ENCODE measurements at regions of chrX and their contacts with region 1.

Region 1: DNA sequence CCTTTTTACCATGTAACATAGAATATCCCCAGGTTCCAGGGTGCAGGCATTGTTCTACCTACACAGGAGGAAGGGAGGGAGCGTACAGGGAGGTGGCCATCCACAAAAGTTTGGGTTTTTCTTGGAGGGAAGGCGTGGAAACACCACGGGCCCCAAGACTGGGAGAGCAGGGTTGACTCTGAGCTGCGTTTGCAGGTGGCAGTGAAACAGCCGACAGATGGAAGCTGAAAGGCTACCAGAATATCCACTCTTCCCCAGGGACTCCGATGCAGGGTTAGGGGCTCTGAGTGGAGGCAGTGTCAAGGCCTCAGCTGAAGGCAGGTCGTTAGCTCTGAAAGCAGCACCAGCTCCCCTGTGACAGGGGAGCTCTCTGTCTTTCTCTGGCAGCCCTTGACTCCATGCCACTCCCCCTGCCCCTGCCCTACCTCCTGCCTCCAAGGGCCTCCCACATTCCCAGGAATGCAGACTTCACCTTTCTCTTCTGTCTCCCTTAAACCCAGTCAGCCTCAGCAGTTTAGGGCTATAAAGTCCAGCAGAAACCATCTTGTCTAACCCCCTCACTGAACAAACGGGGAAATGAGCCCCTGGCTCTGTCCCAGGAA is 14.0 kb upstream of the GLOD5 start:
- DNase-seq: no peak
- H3K4me3 ChIP-seq: no peak overlapping the region
- H3K4me3 Mint-ChIP-seq: no peak overlapping the region
- H3K27ac ChIP-seq: no peak overlapping the region
- H3K27ac Mint-ChIP-seq: peak overlapping the region in 1 of 7 donors; percentile 22
- H3K4me1 ChIP-seq: peaks cover 11 to 14% of the 10 kb centered on the region in 2 donors
- H3K4me1 Mint-ChIP-seq: peaks cover 21% of the 10 kb centered on the region
- H3K27me3 ChIP-seq: no peaks in the 10 kb centered on the region
- H3K27me3 Mint-ChIP-seq: peaks cover 0 to 4% (median 0%) of the 10 kb centered on the region in 3 donors
- CTCF ChIP-seq: no peak

Region 2: GRCh38 chrX:48539345-48540027 is 208.0 kb before region 1 on chrX and contains the start of gene TBC1D25:
- intact Hi-C with region 1: no loop called
- DNase-seq: peak; percentile 96 to 98 (median 98)
- H3K4me3 ChIP-seq: peak within 1 kb of the TSS; percentile 54 to 71 (median 71)
- H3K4me3 Mint-ChIP-seq: peak within 1 kb of the TSS; percentile 80 to 85
- H3K27ac ChIP-seq: peak within 1 kb of the TSS; percentile 86 to 90
- H3K27ac Mint-ChIP-seq: peak within 1 kb of the TSS; percentile 89 to 96 (median 94)
- H3K4me1 ChIP-seq: peaks cover 19 to 30% of the 10 kb centered on the region in 2 donors
- H3K4me1 Mint-ChIP-seq: peaks cover 25% of the 10 kb centered on the region
- H3K27me3 ChIP-seq: no peaks in the 10 kb centered on the region
- H3K27me3 Mint-ChIP-seq: peaks cover 0 to 6% (median 2%) of the 10 kb centered on the region in 3 donors
- CTCF ChIP-seq: peak; percentile 50
- polyA plus RNA-seq, gene TBC1D25: 5.7 to 16.9 (median 6.6) TPM

Region 3: GRCh38 chrX:48794911-48795501 is 47.5 kb after region 1 on chrX:
- intact Hi-C with region 1: loop called in 1 of 2 experiments (anchors 10 kb)
- DNase-seq: no peak
- H3K4me3 ChIP-seq: no peak overlapping the region
- H3K4me3 Mint-ChIP-seq: no peak overlapping the region
- H3K27ac ChIP-seq: no peak overlapping the region
- H3K27ac Mint-ChIP-seq: peak overlapping the region in 1 of 7 donors; percentile 40
- H3K4me1 ChIP-seq: peaks cover 0 to 4% of the 10 kb centered on the region in 2 donors
- H3K4me1 Mint-ChIP-seq: peaks cover 7% of the 10 kb centered on the region
- H3K27me3 ChIP-seq: no peaks in the 10 kb centered on the region
- H3K27me3 Mint-ChIP-seq: peaks cover 0 to 5% (median 0%) of the 10 kb centered on the region in 3 donors
- CTCF ChIP-seq: no peak

Measured in CD14-positive monocyte (primary cell).